Left lung (tissue), 14 donors: ENCODE measurements at regions of chr20 and their contacts with region 1.

Region 1: GRCh38 chr20:31859998-31860709 is 10.2 kb downstream of the DUSP15 start:
- DNase-seq: no peak
- ATAC-seq: peak; percentile 69
- H3K4me3 ChIP-seq: no peak overlapping the region
- H3K27ac ChIP-seq: no peak overlapping the region
- H3K4me1 ChIP-seq: peaks cover 9 to 22% of the 10 kb centered on the region in 2 donors
- H3K27me3 ChIP-seq: peaks cover 13 to 50% of the 10 kb centered on the region in 2 donors
- CTCF ChIP-seq: no peak

Region 2: DNA sequence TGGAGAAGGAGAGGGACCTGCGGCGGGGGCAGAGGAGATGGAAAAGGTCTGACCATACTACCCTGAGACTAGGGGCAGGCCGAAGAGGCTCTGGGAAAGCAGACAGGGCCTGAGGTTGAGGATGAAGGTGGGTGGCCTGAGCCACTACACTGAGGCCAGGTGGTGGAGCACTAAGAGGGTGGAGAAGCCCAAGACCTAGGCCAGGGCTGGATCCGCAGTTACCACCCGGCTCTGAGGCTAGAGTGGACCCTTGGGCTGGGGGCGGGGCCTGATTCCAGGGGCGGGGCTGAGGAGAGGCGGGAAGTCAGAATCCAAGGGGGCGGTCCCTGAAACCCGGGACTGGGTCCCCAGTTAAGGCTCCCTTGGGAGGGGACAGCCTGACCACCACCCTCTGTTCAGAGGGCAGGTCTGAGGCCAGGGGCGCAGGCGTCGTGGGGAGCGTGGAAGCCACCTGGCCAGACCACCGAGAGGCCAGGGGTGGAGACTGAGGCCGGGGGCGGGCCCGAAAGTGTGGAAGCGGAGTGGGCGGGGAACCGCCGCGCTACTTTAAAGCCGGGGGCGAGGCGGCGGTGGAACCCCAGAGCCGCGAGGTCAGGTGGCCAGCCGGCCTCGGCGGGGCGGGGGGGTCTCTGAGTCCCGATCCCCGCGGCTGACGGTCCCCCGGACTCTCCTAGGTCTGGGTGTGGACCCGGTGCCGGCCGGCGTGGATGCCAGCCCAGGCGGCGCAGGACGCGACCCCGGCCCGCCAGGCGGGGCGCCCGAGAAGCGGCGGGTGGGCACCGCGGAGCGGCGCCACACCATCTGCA is 158.3 kb after region 1 on chr20:
- intact Hi-C with region 1: no loop called
- DNase-seq: peak in 3 of 4 donors; percentile 32 to 90 (median 44)
- ATAC-seq: peak; percentile 92
- H3K4me3 ChIP-seq: peak overlapping the region; percentile 41 to 75
- H3K27ac ChIP-seq: no peak overlapping the region
- H3K4me1 ChIP-seq: peaks cover 4 to 28% of the 10 kb centered on the region in 2 donors
- H3K27me3 ChIP-seq: peaks cover 29 to 94% of the 10 kb centered on the region in 2 donors
- CTCF ChIP-seq: no peak

Region 3: GRCh38 chr20:32091888-32092346 is 231.8 kb after region 1 on chr20:
- intact Hi-C with region 1: loop called in 1 of 2 experiments (anchors 10 kb)
- DNase-seq: peak; percentile 38 to 91 (median 73)
- ATAC-seq: peak; percentile 95
- H3K4me3 ChIP-seq: no peak overlapping the region
- H3K27ac ChIP-seq: peak overlapping the region in 1 of 2 donors; percentile 28
- H3K4me1 ChIP-seq: peaks cover 0 to 25% of the 10 kb centered on the region in 2 donors
- H3K27me3 ChIP-seq: no peaks in the 10 kb centered on the region
- CTCF ChIP-seq: peak; percentile 87 to 96